Common myeloid progenitor, CD34-positive (primary cell): ENCODE measurements at regions of chr6 and their contacts with region 1.

Region 1: GRCh38 chr6:16206595-16207037 is 31.8 kb upstream of the GMPR start:
- DNase-seq: peak; percentile 54 to 73 (median 68)
- H3K4me3 ChIP-seq: no peak overlapping the region
- H3K27ac ChIP-seq: no peak overlapping the region
- H3K4me1 ChIP-seq: peaks cover 0 to 2% (median 0%) of the 10 kb centered on the region in 4 experiments
- H3K27me3 ChIP-seq: no peaks in the 10 kb centered on the region

Region 2: DNA sequence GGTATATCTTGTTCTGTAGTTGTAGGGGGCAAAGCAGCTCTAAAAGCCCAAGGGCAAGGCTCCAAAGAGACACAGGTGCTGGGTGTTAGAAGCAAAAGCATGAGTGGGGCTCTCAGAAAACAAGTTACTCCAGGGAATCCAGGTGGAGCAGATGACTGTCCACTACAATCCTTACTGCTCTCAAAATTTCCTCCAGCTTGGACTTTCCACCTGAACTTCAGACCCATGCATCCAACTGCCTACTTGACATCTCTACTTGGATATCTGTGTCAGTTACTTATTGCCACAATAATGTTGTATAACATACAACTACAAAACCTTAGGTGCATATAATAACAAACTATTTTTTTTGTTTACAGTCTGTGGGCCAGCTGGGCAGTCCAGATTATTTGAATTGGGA is 521.0 kb before region 1 on chr6:
- CTCF ChIA-PET with region 1: interaction called, 16 read pairs
- POLR2A ChIA-PET with region 1: no interaction called
- DNase-seq: no peak
- H3K4me3 ChIP-seq: no peak overlapping the region
- H3K27ac ChIP-seq: no peak overlapping the region
- H3K4me1 ChIP-seq: peaks cover 0 to 30% (median 6%) of the 10 kb centered on the region in 4 experiments
- H3K27me3 ChIP-seq: no peaks in the 10 kb centered on the region

Region 3: GRCh38 chr6:15691250-15691869 is 515.3 kb before region 1 on chr6:
- CTCF ChIA-PET with region 1: interaction called, 59 read pairs
- POLR2A ChIA-PET with region 1: no interaction called
- DNase-seq: peak; percentile 89 to 94 (median 91)
- H3K4me3 ChIP-seq: peak overlapping the region in 2 of 7 experiments; percentile 24 to 54
- H3K27ac ChIP-seq: no peak overlapping the region
- H3K4me1 ChIP-seq: peaks cover 0 to 6% (median 3%) of the 10 kb centered on the region in 4 experiments
- H3K27me3 ChIP-seq: no peaks in the 10 kb centered on the region

Region 4: GRCh38 chr6:16216501-16217155 is 10.0 kb after region 1 on chr6:
- CTCF ChIA-PET with region 1: interaction called, 11 read pairs
- POLR2A ChIA-PET with region 1: interaction called, 3 read pairs
- DNase-seq: peak in 1 of 3 donors; percentile 24
- H3K4me3 ChIP-seq: peak overlapping the region in 3 of 7 experiments; percentile 32 to 59 (median 48)
- H3K27ac ChIP-seq: peak overlapping the region in 1 of 2 experiments; percentile 87
- H3K4me1 ChIP-seq: peaks cover 2 to 29% (median 20%) of the 10 kb centered on the region in 4 experiments
- H3K27me3 ChIP-seq: no peaks in the 10 kb centered on the region

Region 5: GRCh38 chr6:16493112-16493511 is 286.5 kb after region 1 on chr6:
- CTCF ChIA-PET with region 1: no interaction called
- POLR2A ChIA-PET with region 1: no interaction called
- DNase-seq: no peak
- H3K4me3 ChIP-seq: no peak overlapping the region
- H3K27ac ChIP-seq: no peak overlapping the region
- H3K4me1 ChIP-seq: peaks cover 3 to 30% (median 15%) of the 10 kb centered on the region in 4 experiments
- H3K27me3 ChIP-seq: no peaks in the 10 kb centered on the region